MCF 10A (cell line): ENCODE measurements at regions of chr1 and their contacts with region 1.

Region 1: GRCh38 chr1:201511941-201512539 is 5.1 kb upstream of the CSRP1 start:
- DNase-seq: no peak
- H3K4me3 Mint-ChIP-seq: no peak overlapping the region
- H3K27ac Mint-ChIP-seq: peak overlapping the region; percentile 31
- H3K4me1 Mint-ChIP-seq: peaks cover 7% of the 10 kb centered on the region
- H3K27me3 Mint-ChIP-seq: no peaks in the 10 kb centered on the region
- CTCF ChIP-seq: no peak

Region 2: DNA sequence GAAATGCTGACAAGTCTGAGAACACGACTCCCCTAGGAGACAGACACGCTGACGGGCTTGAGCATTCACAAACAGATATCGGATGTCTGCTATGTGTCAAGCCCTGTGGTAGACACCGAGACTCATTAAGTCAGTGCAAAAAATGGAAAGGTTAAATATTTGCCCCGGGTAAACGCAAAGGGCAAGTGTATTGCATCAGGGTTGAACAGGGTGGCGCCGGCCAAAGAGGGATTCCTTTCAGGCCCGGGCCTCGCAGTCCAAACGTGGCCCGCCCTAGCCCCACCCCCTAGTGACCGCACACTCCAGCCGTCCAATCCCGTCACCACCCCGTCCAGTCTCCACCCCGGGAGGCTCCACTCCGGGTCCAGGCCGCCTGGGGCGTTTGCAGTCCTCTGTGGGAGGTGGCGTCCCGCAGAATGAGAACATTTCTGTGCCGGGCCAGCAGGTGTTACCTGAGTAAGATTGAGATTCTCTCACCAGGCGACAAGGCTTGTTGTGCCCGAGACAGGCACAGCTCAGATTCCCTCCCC is 341.4 kb before region 1 on chr1:
- CTCF ChIA-PET with region 1: no interaction called
- POLR2A ChIA-PET with region 1: no interaction called
- intact Hi-C with region 1: no loop called
- DNase-seq: peak; percentile 99
- H3K4me3 Mint-ChIP-seq: peak overlapping the region; percentile 73
- H3K27ac Mint-ChIP-seq: peak overlapping the region; percentile 75
- H3K4me1 Mint-ChIP-seq: peaks cover 20% of the 10 kb centered on the region
- H3K27me3 Mint-ChIP-seq: no peaks in the 10 kb centered on the region
- CTCF ChIP-seq: no peak

Region 3: DNA sequence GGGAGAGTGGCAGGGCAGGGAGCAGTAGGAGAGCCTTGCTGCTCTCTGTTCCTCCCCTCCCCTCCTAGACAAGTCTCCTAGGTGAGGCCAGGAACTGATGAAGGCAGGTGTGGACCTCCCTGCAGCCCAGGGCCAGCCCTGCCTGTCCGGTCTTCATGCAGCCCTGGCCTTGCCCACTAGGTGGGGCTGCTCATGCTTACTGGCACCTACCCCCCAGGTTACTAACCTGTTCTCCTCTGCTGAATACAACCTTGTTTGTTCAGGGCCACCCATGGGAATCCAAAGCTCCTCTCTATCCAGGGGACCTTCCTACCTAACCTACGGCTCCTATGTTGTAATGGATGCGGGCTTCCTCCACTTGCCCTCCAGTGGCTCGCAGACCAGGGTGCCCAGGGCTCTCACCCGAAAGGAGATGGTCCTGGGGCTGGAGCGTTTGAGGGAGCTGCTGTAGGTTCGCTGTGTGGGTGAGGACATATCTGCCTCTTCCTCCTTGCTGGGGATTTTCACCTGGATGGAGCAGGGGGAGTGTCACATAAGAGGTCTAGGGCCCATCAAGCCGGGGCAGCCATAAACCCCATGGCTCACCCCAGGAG is 126.6 kb before region 1 on chr1:
- CTCF ChIA-PET with region 1: interaction called, 11 read pairs
- POLR2A ChIA-PET with region 1: no interaction called
- intact Hi-C with region 1: loop called (anchors 2 kb)
- DNase-seq: peak; percentile 80
- H3K4me3 Mint-ChIP-seq: no peak overlapping the region
- H3K27ac Mint-ChIP-seq: no peak overlapping the region
- H3K4me1 Mint-ChIP-seq: peaks cover 19% of the 10 kb centered on the region
- H3K27me3 Mint-ChIP-seq: no peaks in the 10 kb centered on the region
- CTCF ChIP-seq: peak; percentile 99

Region 4: DNA sequence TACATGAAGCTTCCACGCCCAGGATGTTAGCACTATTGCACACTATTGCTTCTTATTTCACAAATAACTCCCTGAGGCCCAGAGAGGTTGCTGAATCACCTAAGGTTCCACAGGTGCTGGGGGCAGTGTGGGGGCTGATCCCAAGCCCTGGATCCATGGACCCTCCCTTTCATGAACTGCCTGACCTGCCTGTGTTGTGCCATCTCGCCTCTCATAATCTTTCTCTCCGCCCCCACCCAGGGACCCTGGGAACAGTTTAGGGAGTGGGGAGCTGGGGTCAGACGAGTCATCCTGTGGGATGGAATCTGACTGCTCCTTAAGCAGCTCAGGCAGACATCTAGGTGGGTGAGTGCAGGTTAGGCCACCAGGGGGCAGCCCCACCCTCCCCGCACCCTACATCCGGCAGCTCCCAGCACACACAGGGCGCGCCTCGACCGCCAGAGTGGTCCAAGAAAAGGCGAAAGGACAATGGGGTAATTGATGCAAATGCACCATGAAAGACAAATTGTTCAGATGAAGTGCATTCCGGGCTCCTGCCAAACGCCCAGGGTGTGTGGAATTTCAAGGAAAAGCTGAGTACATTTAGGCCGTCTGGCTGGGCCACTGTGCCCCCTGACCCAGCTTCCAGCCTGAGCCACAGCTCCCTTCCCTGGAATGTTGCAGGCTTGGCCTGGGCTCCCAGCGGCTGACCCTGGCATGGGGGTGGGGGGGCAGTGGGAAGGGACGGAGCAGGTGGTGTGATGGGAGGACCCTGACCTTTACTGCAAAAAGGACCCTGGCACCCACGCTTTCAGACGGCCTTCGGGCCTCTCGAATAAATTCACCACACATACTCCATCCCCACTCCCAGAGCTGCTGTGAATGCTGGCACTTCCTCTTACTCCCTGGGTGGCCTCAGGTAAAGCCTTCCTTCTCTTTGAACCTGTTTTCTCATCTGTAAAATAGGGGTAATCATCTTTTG is 63.8 kb before region 1 on chr1:
- CTCF ChIA-PET with region 1: interaction called, 3,816 read pairs
- POLR2A ChIA-PET with region 1: interaction called, 21 read pairs
- intact Hi-C with region 1: loop called (anchors 1 kb)
- DNase-seq: peak; percentile 89
- H3K4me3 Mint-ChIP-seq: no peak overlapping the region
- H3K27ac Mint-ChIP-seq: peak overlapping the region; percentile 36
- H3K4me1 Mint-ChIP-seq: peaks cover 8% of the 10 kb centered on the region
- H3K27me3 Mint-ChIP-seq: no peaks in the 10 kb centered on the region
- CTCF ChIP-seq: peak; percentile 98

Region 5: DNA sequence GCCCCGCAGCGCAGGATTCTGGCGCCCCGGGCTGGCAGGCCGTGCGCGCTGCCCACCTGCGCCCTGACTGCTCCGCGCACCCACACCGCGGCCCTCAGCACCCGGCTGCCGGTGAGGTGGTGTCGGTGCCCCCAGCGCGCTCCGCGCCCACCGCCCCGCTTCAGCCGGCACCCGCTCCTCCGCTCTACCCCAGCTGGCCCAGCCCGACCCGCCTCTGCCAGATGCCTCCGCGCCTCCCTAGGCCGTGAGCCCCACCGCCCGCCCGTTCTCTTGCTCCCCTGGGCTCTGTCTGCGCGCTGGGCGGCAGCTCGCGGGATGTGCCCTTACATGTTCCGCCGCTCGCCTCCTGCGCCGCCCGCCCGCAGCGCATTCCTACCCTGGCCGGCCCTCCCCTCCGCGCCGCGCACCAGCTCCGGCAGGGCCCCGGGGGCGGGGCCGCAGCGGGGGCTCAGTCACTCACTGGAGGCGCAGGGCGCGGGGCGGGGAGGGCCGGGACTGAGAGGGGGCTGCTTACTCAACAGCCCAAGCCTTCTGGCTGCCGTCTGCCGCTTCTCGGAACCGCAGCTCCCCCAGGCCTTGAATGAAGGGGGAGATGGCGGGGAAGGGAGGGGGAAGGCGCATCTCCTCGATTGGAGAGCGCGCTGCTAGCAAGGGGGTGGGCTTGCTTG is 43.1 kb before region 1 on chr1 and contains the start of gene PHLDA3:
- CTCF ChIA-PET with region 1: interaction called, 3,816 read pairs
- POLR2A ChIA-PET with region 1: interaction called, 227 read pairs
- intact Hi-C with region 1: no loop called
- DNase-seq: peak; percentile 95
- H3K4me3 Mint-ChIP-seq: peak within 1 kb of the TSS; percentile 97
- H3K27ac Mint-ChIP-seq: peak within 1 kb of the TSS; percentile 90
- H3K4me1 Mint-ChIP-seq: peaks cover 55% of the 10 kb centered on the region
- H3K27me3 Mint-ChIP-seq: no peaks in the 10 kb centered on the region
- CTCF ChIP-seq: no peak
- total RNA-seq, gene PHLDA3: 169 and 204 TPM in 2 replicates

Region 6: GRCh38 chr1:201488817-201489589 is 23.0 kb before region 1 on chr1:
- CTCF ChIA-PET with region 1: interaction called, 3,816 read pairs
- POLR2A ChIA-PET with region 1: interaction called, 330 read pairs
- intact Hi-C with region 1: no loop called
- DNase-seq: peak; percentile 100
- H3K4me3 Mint-ChIP-seq: peak overlapping the region; percentile 40
- H3K27ac Mint-ChIP-seq: peak overlapping the region; percentile 95
- H3K4me1 Mint-ChIP-seq: peaks cover 54% of the 10 kb centered on the region
- H3K27me3 Mint-ChIP-seq: no peaks in the 10 kb centered on the region
- CTCF ChIP-seq: no peak

Region 7: GRCh38 chr1:201530741-201531531 is 18.9 kb after region 1 on chr1:
- CTCF ChIA-PET with region 1: interaction called, 3,816 read pairs
- POLR2A ChIA-PET with region 1: interaction called, 3 read pairs
- intact Hi-C with region 1: no loop called
- DNase-seq: peak; percentile 91
- H3K4me3 Mint-ChIP-seq: no peak overlapping the region
- H3K27ac Mint-ChIP-seq: peak overlapping the region; percentile 46
- H3K4me1 Mint-ChIP-seq: peaks cover 9% of the 10 kb centered on the region
- H3K27me3 Mint-ChIP-seq: no peaks in the 10 kb centered on the region
- CTCF ChIP-seq: peak; percentile 99

Region 8: GRCh38 chr1:201570886-201571624 is 59.0 kb after region 1 on chr1:
- CTCF ChIA-PET with region 1: no interaction called
- POLR2A ChIA-PET with region 1: no interaction called
- intact Hi-C with region 1: no loop called
- DNase-seq: no peak
- H3K4me3 Mint-ChIP-seq: no peak overlapping the region
- H3K27ac Mint-ChIP-seq: no peak overlapping the region
- H3K4me1 Mint-ChIP-seq: peaks cover 5% of the 10 kb centered on the region
- H3K27me3 Mint-ChIP-seq: no peaks in the 10 kb centered on the region
- CTCF ChIP-seq: no peak